HEK293T (cell line): ENCODE measurements at regions of chr12 and their contacts with region 1.

Region 1: DNA sequence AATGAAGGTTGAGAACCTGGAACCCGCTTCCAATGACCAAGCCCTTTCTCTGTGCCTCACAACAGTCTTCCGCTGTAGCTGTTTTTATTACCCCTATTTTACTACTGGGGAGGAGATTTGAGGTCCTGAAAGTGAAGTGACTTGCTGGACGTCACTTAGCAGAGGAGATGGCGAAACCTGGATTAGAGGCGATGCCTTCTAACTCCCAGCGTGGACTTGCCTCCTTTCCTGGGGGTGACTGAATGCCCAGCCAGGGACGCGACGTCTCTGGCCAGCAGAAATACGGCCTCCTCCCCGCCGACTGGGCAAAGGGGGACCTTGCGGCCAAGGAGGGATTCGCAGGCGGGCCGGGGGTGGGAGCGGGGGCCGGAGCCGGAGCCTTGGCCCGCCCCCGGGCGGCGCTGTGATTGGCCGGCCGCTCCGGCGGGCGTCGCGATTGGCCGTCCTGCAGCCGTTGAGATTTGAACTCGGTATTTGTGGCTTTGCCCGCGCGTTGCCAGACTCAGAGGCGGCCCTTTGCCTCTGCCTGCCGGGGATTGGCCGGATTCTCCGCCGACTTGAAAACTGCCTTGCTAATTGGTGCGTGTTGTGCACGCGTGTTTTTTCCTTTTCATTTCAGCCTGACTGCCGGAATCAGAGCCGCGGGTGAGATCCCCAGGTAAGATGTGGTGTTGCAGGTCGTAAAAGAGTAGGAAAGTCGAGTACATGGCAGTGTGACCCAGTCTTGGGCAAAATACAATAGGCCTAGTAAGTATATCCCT is at the start of gene NCAPD2:
- DNase-seq: peak; percentile 92

Region 2: GRCh38 chr12:6451348-6452244 is 42.1 kb before region 1 on chr12 and contains the start of gene TAPBPL:
- CTCF ChIA-PET with region 1: no interaction called
- POLR2A ChIA-PET with region 1: interaction called, 10 read pairs
- DNase-seq: peak; percentile 53

Region 3: GRCh38 chr12:6540181-6540877 is 46.7 kb after region 1 on chr12:
- CTCF ChIA-PET with region 1: interaction called, 4 read pairs
- POLR2A ChIA-PET with region 1: interaction called, 52 read pairs
- DNase-seq: no peak

Region 4: GRCh38 chr12:6592087-6592486 is 98.4 kb after region 1 on chr12:
- CTCF ChIA-PET with region 1: no interaction called
- POLR2A ChIA-PET with region 1: no interaction called
- DNase-seq: no peak